Endothelial cell of umbilical vein (primary cell): ENCODE measurements at regions of chr11 and their contacts with region 1.

Region 1: GRCh38 chr11:68257475-68258362 is 14.1 kb downstream of the C11orf24 start:
- DNase-seq: peak; percentile 78
- H3K4me3 ChIP-seq: no peak overlapping the region
- H3K27ac ChIP-seq: no peak overlapping the region
- H3K4me1 ChIP-seq: peaks cover 2% of the 10 kb centered on the region
- H3K27me3 ChIP-seq: no peaks in the 10 kb centered on the region
- CTCF ChIP-seq: peak; percentile 69 to 87
- POLR2A ChIP-seq: no peak

Region 2: GRCh38 chr11:68213555-68214174 is 44.1 kb before region 1 on chr11:
- CTCF ChIA-PET with region 1: interaction called, 3 read pairs
- POLR2A ChIA-PET with region 1: no interaction called
- dilution Hi-C with region 1: no loop called
- intact Hi-C with region 1: loop called (anchors 2 kb)
- DNase-seq: peak; percentile 87
- H3K4me3 ChIP-seq: peak overlapping the region; percentile 49 to 84 (median 75)
- H3K27ac ChIP-seq: peak overlapping the region; percentile 88
- H3K4me1 ChIP-seq: peaks cover 17% of the 10 kb centered on the region
- H3K27me3 ChIP-seq: peaks cover 0 to 6% of the 10 kb centered on the region in 2 experiments
- CTCF ChIP-seq: no peak
- POLR2A ChIP-seq: peak; percentile 99

Region 3: GRCh38 chr11:68271781-68272608 is 14.3 kb after region 1 on chr11 and contains the start of gene C11orf24:
- CTCF ChIA-PET with region 1: interaction called, 33 read pairs
- POLR2A ChIA-PET with region 1: no interaction called
- dilution Hi-C with region 1: no loop called
- intact Hi-C with region 1: loop called (anchors 1 kb)
- DNase-seq: peak; percentile 90
- H3K4me3 ChIP-seq: peak within 1 kb of the TSS; percentile 59 to 68 (median 60)
- H3K27ac ChIP-seq: peak within 1 kb of the TSS; percentile 71
- H3K4me1 ChIP-seq: peaks cover 7% of the 10 kb centered on the region
- H3K27me3 ChIP-seq: no peaks in the 10 kb centered on the region
- CTCF ChIP-seq: no peak
- POLR2A ChIP-seq: peak; percentile 77
- total RNA-seq, gene C11orf24: 26.4 and 28.4 TPM in 2 replicates

Region 4: GRCh38 chr11:68287419-68287818 is 29.7 kb after region 1 on chr11:
- CTCF ChIA-PET with region 1: interaction called, 14 read pairs
- POLR2A ChIA-PET with region 1: no interaction called
- dilution Hi-C with region 1: no loop called
- intact Hi-C with region 1: no loop called
- DNase-seq: peak; percentile 62
- H3K4me3 ChIP-seq: no peak overlapping the region
- H3K27ac ChIP-seq: no peak overlapping the region
- H3K4me1 ChIP-seq: no peaks in the 10 kb centered on the region
- H3K27me3 ChIP-seq: peaks cover 2 to 4% of the 10 kb centered on the region in 2 experiments
- CTCF ChIP-seq: no peak
- POLR2A ChIP-seq: no peak